Activated B cell treated with CpG ODN at 0.5 μM for 24 hours (primary cell): ENCODE measurements at regions of chr6 and their contacts with region 1.

Region 1: GRCh38 chr6:32271429-32271828 is 47.6 kb upstream of the NOTCH4 start:
- DNase-seq: no peak
- ATAC-seq: peak; percentile 61
- H3K4me3 Mint-ChIP-seq: peak overlapping the region; percentile 69
- H3K27ac Mint-ChIP-seq: peak overlapping the region; percentile 83
- H3K4me1 Mint-ChIP-seq: peaks cover 77% of the 10 kb centered on the region
- H3K27me3 Mint-ChIP-seq: no peaks in the 10 kb centered on the region
- CTCF ChIP-seq: no peak

Region 2: GRCh38 chr6:31058128-31058894 is 1213.1 kb before region 1 on chr6:
- CTCF ChIA-PET with region 1: no interaction called
- POLR2A ChIA-PET with region 1: no interaction called
- intact Hi-C with region 1: no loop called
- DNase-seq: no peak
- ATAC-seq: no peak
- H3K4me3 Mint-ChIP-seq: no peak overlapping the region
- H3K27ac Mint-ChIP-seq: no peak overlapping the region
- H3K4me1 Mint-ChIP-seq: peaks cover 18% of the 10 kb centered on the region
- H3K27me3 Mint-ChIP-seq: peaks cover 2% of the 10 kb centered on the region
- CTCF ChIP-seq: no peak

Region 3: DNA sequence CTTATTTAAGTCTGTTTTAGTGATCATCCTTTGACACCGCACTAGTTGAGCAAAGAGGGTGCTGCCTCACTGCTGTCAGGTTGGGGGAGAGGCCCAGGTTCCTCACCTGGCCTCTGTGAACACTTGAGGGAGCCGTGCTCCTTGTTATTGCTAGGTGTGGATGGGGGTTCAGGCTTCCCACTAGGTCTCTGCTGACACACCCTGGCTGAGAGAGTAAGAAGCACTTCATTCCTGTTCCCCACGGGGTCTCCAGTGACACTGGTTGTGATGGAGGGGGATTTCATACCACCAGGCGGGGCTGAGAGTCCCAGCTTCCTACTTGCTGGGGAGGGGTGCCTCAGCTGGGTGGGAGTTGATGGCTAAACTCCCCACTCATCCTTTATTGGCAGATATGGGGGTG is 36.5 kb before region 1 on chr6:
- CTCF ChIA-PET with region 1: no interaction called
- POLR2A ChIA-PET with region 1: no interaction called
- intact Hi-C with region 1: no loop called
- DNase-seq: no peak
- ATAC-seq: no peak
- H3K4me3 Mint-ChIP-seq: no peak overlapping the region
- H3K27ac Mint-ChIP-seq: no peak overlapping the region
- H3K4me1 Mint-ChIP-seq: no peaks in the 10 kb centered on the region
- H3K27me3 Mint-ChIP-seq: peaks cover 3% of the 10 kb centered on the region
- CTCF ChIP-seq: no peak

Region 4: GRCh38 chr6:32255199-32256153 is 16.0 kb before region 1 on chr6:
- CTCF ChIA-PET with region 1: interaction called, 21 read pairs
- POLR2A ChIA-PET with region 1: interaction called, 24 read pairs
- intact Hi-C with region 1: loop called (anchors 1 kb)
- DNase-seq: peak; percentile 54
- ATAC-seq: peak; percentile 79
- H3K4me3 Mint-ChIP-seq: peak overlapping the region; percentile 84
- H3K27ac Mint-ChIP-seq: peak overlapping the region; percentile 92
- H3K4me1 Mint-ChIP-seq: peaks cover 77% of the 10 kb centered on the region
- H3K27me3 Mint-ChIP-seq: no peaks in the 10 kb centered on the region
- CTCF ChIP-seq: peak; percentile 39

Region 5: GRCh38 chr6:32313964-32314363 is 42.5 kb after region 1 on chr6:
- CTCF ChIA-PET with region 1: no interaction called
- POLR2A ChIA-PET with region 1: no interaction called
- intact Hi-C with region 1: loop called (anchors 5 kb)
- DNase-seq: no peak
- ATAC-seq: no peak
- H3K4me3 Mint-ChIP-seq: no peak overlapping the region
- H3K27ac Mint-ChIP-seq: no peak overlapping the region
- H3K4me1 Mint-ChIP-seq: no peaks in the 10 kb centered on the region
- H3K27me3 Mint-ChIP-seq: no peaks in the 10 kb centered on the region
- CTCF ChIP-seq: no peak

Region 6: GRCh38 chr6:32327103-32327502 is 55.7 kb after region 1 on chr6:
- CTCF ChIA-PET with region 1: interaction called, 4 read pairs
- POLR2A ChIA-PET with region 1: interaction called, 7 read pairs
- intact Hi-C with region 1: loop called (anchors 2 kb)
- DNase-seq: no peak
- ATAC-seq: peak; percentile 89
- H3K4me3 Mint-ChIP-seq: peak overlapping the region; percentile 44
- H3K27ac Mint-ChIP-seq: peak overlapping the region; percentile 69
- H3K4me1 Mint-ChIP-seq: peaks cover 25% of the 10 kb centered on the region
- H3K27me3 Mint-ChIP-seq: no peaks in the 10 kb centered on the region
- CTCF ChIP-seq: no peak

Region 7: GRCh38 chr6:33335916-33336315 is 1064.5 kb after region 1 on chr6:
- CTCF ChIA-PET with region 1: no interaction called
- POLR2A ChIA-PET with region 1: interaction called, 10 read pairs
- intact Hi-C with region 1: no loop called
- DNase-seq: no peak
- ATAC-seq: peak; percentile 21
- H3K4me3 Mint-ChIP-seq: no peak overlapping the region
- H3K27ac Mint-ChIP-seq: no peak overlapping the region
- H3K4me1 Mint-ChIP-seq: peaks cover 52% of the 10 kb centered on the region
- H3K27me3 Mint-ChIP-seq: no peaks in the 10 kb centered on the region
- CTCF ChIP-seq: no peak